ENCODE measurements at regions of chr12 and their contacts with region 1.

Region 1: GRCh38 chr12:4743046-4743445 is 22.8 kb downstream of the GALNT8 start:
- DNase-seq: no peak
- H3K4me3 ChIP-seq: no peak overlapping the region
- H3K27ac ChIP-seq: no peak overlapping the region
- H3K4me1 ChIP-seq: no peaks in the 10 kb centered on the region
- H3K27me3 ChIP-seq: no peaks in the 10 kb centered on the region
- CTCF ChIP-seq: no peak

Region 2: GRCh38 chr12:4663971-4664505 is 79.0 kb before region 1 on chr12:
- CTCF ChIA-PET with region 1: no interaction called
- dilution Hi-C with region 1: loop called (anchors 5 kb)
- in situ Hi-C with region 1: no loop called
- intact Hi-C with region 1: no loop called
- DNase-seq: peak; percentile 61
- H3K4me3 ChIP-seq: no peak overlapping the region
- H3K27ac ChIP-seq: no peak overlapping the region
- H3K4me1 ChIP-seq: no peaks in the 10 kb centered on the region
- H3K27me3 ChIP-seq: no peaks in the 10 kb centered on the region
- CTCF ChIP-seq: no peak

Region 3: GRCh38 chr12:4819654-4820053 is 76.6 kb after region 1 on chr12:
- CTCF ChIA-PET with region 1: no interaction called
- dilution Hi-C with region 1: loop called (anchors 5 kb)
- in situ Hi-C with region 1: no loop called
- intact Hi-C with region 1: no loop called
- DNase-seq: no peak
- H3K4me3 ChIP-seq: no peak overlapping the region
- H3K27ac ChIP-seq: no peak overlapping the region
- H3K4me1 ChIP-seq: peaks cover 6% of the 10 kb centered on the region
- H3K27me3 ChIP-seq: peaks cover 4% of the 10 kb centered on the region
- CTCF ChIP-seq: no peak